Esophagus muscularis mucosa (tissue), 4 donors: ENCODE measurements at regions of chr4 and their contacts with region 1.

Region 1: GRCh38 chr4:79597266-79597665 is 189.2 kb upstream of the GK2 start:
- DNase-seq: no peak
- H3K4me3 ChIP-seq: no peak overlapping the region
- H3K27ac ChIP-seq: peak overlapping the region; percentile 79 to 87 (median 83)
- H3K4me1 ChIP-seq: peaks cover 20 to 46% (median 35%) of the 10 kb centered on the region in 4 donors
- H3K27me3 ChIP-seq: no peaks in the 10 kb centered on the region
- CTCF ChIP-seq: no peak
- EP300 ChIP-seq: no peak
- POLR2A ChIP-seq: no peak

Region 2: DNA sequence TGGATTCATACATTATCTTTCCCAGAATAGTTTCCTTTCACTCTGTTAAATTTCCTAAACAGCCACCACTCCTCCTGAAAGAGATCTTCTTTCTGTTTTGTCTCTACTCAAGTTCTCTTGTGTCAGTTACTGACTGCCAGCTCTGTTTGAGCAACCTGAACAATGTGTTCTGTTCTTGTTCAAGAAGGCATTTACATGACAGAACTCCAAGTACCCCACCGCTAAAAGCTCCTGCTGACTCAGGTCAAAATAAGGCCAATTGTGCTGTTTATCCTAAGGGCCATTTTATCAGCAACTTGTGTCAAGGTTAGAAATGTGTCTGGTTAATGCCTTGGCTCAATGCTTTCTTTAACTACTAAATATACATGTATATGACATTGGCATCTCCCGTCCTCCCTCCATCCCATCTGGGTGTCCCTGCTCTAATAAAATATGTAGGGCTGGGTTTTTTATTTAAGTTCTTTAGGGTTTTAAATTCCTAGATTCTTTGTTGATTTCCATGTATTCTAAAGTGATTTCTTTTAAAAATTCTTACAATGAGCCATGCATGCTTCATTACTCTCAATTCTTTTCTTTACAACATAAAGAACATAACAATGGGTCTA is 513.8 kb before region 1 on chr4:
- intact Hi-C with region 1: loop called (anchors 5 kb)
- DNase-seq: no peak
- H3K4me3 ChIP-seq: peak overlapping the region in 2 of 4 donors; percentile 21 to 22
- H3K27ac ChIP-seq: peak overlapping the region; percentile 70 to 86 (median 78)
- H3K4me1 ChIP-seq: peaks cover 0 to 29% (median 19%) of the 10 kb centered on the region in 4 donors
- H3K27me3 ChIP-seq: no peaks in the 10 kb centered on the region
- CTCF ChIP-seq: no peak
- EP300 ChIP-seq: peak; percentile 99
- POLR2A ChIP-seq: no peak

Region 3: GRCh38 chr4:79638735-79639134 is 41.5 kb after region 1 on chr4:
- intact Hi-C with region 1: no loop called
- DNase-seq: no peak
- H3K4me3 ChIP-seq: no peak overlapping the region
- H3K27ac ChIP-seq: no peak overlapping the region
- H3K4me1 ChIP-seq: no peaks in the 10 kb centered on the region
- H3K27me3 ChIP-seq: no peaks in the 10 kb centered on the region
- CTCF ChIP-seq: no peak
- EP300 ChIP-seq: no peak
- POLR2A ChIP-seq: no peak